WTC11 (cell line): ENCODE measurements at regions of chr12 and their contacts with region 1.

Region 1: GRCh38 chr12:106357549-106358395 is at the start of gene POLR3B:
- DNase-seq: peak; percentile 95
- ATAC-seq: peak; percentile 91
- H3K4me3 Mint-ChIP-seq: peak within 1 kb of the TSS; percentile 86
- H3K27ac Mint-ChIP-seq: peak within 1 kb of the TSS; percentile 50
- H3K4me1 Mint-ChIP-seq: peaks cover 11% of the 10 kb centered on the region
- H3K27me3 Mint-ChIP-seq: no peaks in the 10 kb centered on the region; the same call in 1 of the 2 replicates
- CTCF ChIP-seq: peak; percentile 52
- total RNA-seq, gene POLR3B: 9.0 to 10.2 TPM (median 9.4 TPM) in 3 replicates

Region 2: DNA sequence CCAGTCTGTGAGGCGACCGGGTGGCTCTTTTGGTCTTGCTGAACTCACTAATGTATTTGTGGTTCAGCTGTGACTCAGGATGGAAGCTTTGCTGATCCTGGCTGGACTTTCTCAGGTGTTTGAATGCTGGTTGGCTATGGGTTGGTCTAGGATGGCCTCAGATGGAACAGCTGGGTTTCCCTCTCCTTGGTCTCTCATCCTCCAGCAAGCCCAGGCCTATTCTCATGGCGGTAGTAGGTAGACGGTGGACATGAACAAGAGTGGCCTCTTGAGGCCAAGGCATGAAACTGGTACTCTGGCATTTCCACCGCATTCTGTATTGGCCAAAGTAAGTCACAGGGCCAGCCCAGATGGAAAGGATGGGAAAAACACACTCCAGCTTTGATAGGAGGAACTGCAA is 12.0 kb before region 1 on chr12:
- CTCF ChIA-PET with region 1: interaction called, 19 read pairs
- POLR2A ChIA-PET with region 1: interaction called, 3 read pairs
- DNase-seq: peak; percentile 41
- ATAC-seq: peak; percentile 100
- H3K4me3 Mint-ChIP-seq: no peak overlapping the region
- H3K27ac Mint-ChIP-seq: no peak overlapping the region
- H3K4me1 Mint-ChIP-seq: 0 out of 2 replicates have a peak, but pooled peaks cover 3% of the 10 kb centered on the region
- H3K27me3 Mint-ChIP-seq: no peaks in the 10 kb centered on the region
- CTCF ChIP-seq: no peak

Region 3: GRCh38 chr12:106455111-106455510 is 97.3 kb after region 1 on chr12:
- CTCF ChIA-PET with region 1: no interaction called
- POLR2A ChIA-PET with region 1: no interaction called
- DNase-seq: no peak
- ATAC-seq: no peak
- H3K4me3 Mint-ChIP-seq: no peak overlapping the region
- H3K27ac Mint-ChIP-seq: no peak overlapping the region
- H3K4me1 Mint-ChIP-seq: peaks cover 18% of the 10 kb centered on the region
- H3K27me3 Mint-ChIP-seq: no peaks in the 10 kb centered on the region
- CTCF ChIP-seq: no peak

Region 4: DNA sequence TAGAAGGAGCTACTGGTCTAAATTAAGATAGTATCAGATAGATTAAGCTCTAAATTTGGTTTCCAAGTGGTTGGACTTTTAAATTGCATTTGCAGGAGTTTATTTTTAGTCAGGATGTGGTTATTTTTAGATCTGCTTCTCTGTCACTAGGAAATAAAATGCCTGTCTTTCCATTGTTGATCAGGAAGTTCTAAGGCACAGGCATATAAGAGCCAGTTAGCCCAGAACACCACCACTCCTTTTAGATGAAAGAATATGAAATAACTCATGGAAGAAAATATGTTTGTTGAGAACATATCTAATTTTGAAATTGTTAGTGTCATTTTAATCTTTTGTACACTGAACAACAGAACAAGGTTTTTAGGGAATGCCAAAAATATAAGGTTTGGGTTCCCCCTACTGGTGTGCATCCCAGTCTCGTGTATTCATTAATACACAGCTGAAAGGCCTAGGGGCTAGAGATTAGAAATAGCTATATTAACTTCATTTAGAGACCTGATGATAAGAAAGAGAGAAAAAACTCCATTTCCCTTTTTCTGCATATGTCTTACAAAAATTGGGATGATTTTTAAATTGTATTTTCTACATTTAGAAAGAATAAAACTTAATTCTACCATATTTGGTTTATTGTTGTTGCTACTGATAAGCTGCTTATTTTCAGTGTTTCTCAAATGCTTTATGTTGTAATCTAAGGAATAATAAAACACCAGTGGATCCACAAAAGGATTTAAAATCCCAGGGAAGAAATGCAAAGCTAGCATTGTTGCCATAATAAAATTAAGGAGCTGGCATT is 483.9 kb after region 1 on chr12:
- CTCF ChIA-PET with region 1: interaction called, 21 read pairs
- POLR2A ChIA-PET with region 1: interaction called, 10 read pairs
- DNase-seq: no peak
- ATAC-seq: peak; percentile 22; the same call in 1 of the 2 replicates
- H3K4me3 Mint-ChIP-seq: no peak overlapping the region
- H3K27ac Mint-ChIP-seq: no peak overlapping the region
- H3K4me1 Mint-ChIP-seq: peaks cover 31% of the 10 kb centered on the region
- H3K27me3 Mint-ChIP-seq: no peaks in the 10 kb centered on the region
- CTCF ChIP-seq: peak; percentile 17; the same call in 1 of the 2 replicates

Region 5: GRCh38 chr12:106903241-106903945 is 545.6 kb after region 1 on chr12:
- CTCF ChIA-PET with region 1: interaction called, 12 read pairs
- POLR2A ChIA-PET with region 1: no interaction called
- DNase-seq: peak; percentile 90
- ATAC-seq: peak; percentile 99
- H3K4me3 Mint-ChIP-seq: peak overlapping the region; percentile 79
- H3K27ac Mint-ChIP-seq: no peak overlapping the region
- H3K4me1 Mint-ChIP-seq: peaks cover 10% of the 10 kb centered on the region
- H3K27me3 Mint-ChIP-seq: peaks cover 42% of the 10 kb centered on the region
- CTCF ChIP-seq: no peak

Region 6: DNA sequence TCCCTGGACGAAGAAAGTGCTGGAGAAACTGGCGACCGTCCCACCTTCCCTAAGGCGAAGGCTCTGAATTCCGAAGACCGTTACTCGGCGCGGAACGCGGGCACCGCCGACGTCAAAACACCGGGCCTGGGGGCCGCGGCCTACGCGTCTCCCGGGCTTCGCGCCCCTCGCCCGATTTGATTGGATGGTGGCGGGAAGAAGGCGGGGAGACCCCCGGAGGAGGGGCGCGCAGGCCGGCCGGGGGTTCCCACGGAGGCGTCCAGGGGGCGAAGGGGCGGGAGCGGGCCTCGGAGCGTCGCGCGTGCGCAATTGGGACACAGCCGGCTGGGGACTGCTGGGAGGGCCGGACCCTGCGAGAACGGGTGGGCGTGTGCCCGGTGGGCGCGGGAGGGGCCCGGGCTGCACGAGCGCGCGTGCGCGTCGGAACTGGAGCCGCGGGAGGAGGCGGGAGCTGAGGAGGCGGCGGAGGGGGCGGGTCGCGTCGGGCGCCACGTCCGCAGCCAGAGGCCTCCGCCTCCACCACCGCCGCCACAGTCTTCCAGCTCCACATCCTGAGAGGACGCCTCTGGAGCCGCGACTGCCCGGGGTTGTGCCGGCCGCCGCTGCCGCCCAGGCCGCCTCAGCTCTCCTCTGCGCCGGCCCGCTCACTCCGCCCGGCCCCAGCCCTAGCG is 597.7 kb after region 1 on chr12 and contains the start of gene TMEM263:
- CTCF ChIA-PET with region 1: interaction called, 14 read pairs
- POLR2A ChIA-PET with region 1: no interaction called
- DNase-seq: peak; percentile 89
- ATAC-seq: peak; percentile 79
- H3K4me3 Mint-ChIP-seq: peak within 1 kb of the TSS; percentile 97
- H3K27ac Mint-ChIP-seq: peak within 1 kb of the TSS; percentile 94
- H3K4me1 Mint-ChIP-seq: peaks cover 8% of the 10 kb centered on the region
- H3K27me3 Mint-ChIP-seq: peaks cover 41% of the 10 kb centered on the region
- CTCF ChIP-seq: no peak
- total RNA-seq, gene TMEM263: 15.2 to 18.0 TPM (median 16.8 TPM) in 3 replicates